Mammary epithelial cell (primary cell): ENCODE measurements at regions of chr11 and their contacts with region 1.

Region 1: DNA sequence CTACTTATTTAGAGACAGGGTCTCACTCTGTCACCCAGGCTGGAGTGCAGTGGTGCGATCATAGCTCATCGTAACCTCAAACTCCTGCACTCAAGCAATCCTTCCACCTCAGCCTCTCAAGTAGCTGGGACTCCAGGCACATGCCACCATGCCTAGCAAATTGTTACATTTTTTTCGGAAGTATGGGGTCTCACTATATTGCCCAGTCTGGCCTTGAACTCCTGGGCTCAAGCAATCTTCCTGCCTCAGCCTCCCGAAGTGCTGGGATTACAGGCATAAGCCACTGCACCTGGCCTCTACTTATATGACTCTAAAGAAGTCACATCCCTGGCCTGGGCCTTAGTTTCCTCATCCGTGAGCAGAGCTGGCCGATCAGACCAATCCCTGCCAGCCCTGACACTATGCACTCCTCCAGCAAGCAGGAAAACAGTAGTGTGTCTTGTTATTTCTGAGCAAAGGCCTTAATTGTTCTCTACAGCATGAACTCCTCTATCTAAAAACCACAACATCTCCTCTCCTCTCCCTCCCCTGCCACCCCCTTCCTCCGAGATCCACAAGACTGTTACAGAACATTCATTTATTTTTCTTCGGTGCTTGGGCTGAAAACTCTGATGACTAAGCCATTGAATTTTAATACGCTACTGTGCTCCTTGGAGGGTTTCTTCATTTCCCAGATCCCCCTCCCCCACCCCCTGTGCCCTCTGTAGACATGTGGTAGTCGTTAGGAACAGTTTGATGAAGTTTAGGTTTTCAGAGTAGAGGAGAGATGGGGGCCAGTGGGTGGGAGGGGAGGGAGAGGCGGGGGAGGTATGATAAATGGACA is 91.5 kb downstream of the ABTB2 start:
- DNase-seq: peak; percentile 92
- H3K4me3 ChIP-seq: no peak overlapping the region
- H3K27ac ChIP-seq: no peak overlapping the region
- H3K4me1 ChIP-seq: peaks cover 25% of the 10 kb centered on the region
- H3K27me3 ChIP-seq: no peaks in the 10 kb centered on the region
- CTCF ChIP-seq: no peak

Region 2: DNA sequence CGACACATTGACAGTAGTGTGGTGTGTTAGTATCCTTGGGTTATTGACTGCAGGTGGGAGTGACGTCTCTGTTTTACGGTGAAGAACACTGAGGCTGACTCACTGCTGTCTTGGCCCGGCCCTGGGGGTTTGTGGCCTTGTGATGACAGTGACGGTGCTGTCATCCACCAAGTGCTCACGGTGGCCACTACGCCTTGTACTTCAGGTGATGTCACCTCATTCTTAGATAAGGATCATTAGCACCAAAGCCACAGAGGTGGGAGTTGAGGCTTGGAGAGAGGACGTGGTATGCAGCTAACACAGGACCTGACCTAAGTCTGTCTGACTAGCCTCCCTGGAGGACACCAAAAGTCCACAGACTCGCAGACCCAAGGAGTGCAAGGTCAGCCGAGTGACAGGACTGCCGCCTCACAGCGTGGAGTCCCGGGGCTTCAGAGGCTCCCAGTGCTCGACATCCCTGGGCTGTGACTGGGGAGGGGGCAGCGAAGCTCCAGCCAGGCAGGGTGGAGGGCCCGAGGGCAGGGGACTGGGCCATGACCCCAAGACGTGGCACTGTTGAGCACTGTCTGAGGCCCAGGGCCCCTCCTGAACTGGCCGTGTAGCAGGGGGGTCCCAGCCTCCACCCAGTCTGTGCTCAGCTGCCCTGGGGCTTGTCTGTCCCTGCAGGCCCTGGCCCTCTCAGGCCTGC is 104.3 kb before region 1 on chr11:
- CTCF ChIA-PET with region 1: no interaction called
- dilution Hi-C with region 1: loop called (anchors 5 kb)
- in situ Hi-C with region 1: no loop called
- intact Hi-C with region 1: no loop called
- DNase-seq: peak; percentile 47
- H3K4me3 ChIP-seq: no peak overlapping the region
- H3K27ac ChIP-seq: no peak overlapping the region
- H3K4me1 ChIP-seq: peaks cover 5% of the 10 kb centered on the region
- H3K27me3 ChIP-seq: no peaks in the 10 kb centered on the region
- CTCF ChIP-seq: no peak

Region 3: GRCh38 chr11:34234086-34234740 is 32.1 kb before region 1 on chr11:
- CTCF ChIA-PET with region 1: no interaction called
- dilution Hi-C with region 1: no loop called
- in situ Hi-C with region 1: no loop called
- intact Hi-C with region 1: no loop called
- DNase-seq: peak; percentile 72
- H3K4me3 ChIP-seq: no peak overlapping the region
- H3K27ac ChIP-seq: no peak overlapping the region
- H3K4me1 ChIP-seq: peaks cover 3% of the 10 kb centered on the region
- H3K27me3 ChIP-seq: no peaks in the 10 kb centered on the region
- CTCF ChIP-seq: no peak